ENCODE measurements at regions of chr2 and their contacts with region 1.

Region 1: GRCh38 chr2:168105127-168105683 is 142.2 kb downstream of the STK39 start:
- DNase-seq: no peak
- ATAC-seq: peak in 1 of 4 donors; percentile 20
- H3K4me3 ChIP-seq: no peak overlapping the region
- H3K27ac ChIP-seq: no peak overlapping the region
- H3K4me1 ChIP-seq: peaks cover 0 to 5% (median 0%) of the 10 kb centered on the region in 12 donors
- H3K27me3 ChIP-seq: no peaks in the 10 kb centered on the region
- CTCF ChIP-seq: no peak
- POLR2A ChIP-seq: no peak

Region 2: DNA sequence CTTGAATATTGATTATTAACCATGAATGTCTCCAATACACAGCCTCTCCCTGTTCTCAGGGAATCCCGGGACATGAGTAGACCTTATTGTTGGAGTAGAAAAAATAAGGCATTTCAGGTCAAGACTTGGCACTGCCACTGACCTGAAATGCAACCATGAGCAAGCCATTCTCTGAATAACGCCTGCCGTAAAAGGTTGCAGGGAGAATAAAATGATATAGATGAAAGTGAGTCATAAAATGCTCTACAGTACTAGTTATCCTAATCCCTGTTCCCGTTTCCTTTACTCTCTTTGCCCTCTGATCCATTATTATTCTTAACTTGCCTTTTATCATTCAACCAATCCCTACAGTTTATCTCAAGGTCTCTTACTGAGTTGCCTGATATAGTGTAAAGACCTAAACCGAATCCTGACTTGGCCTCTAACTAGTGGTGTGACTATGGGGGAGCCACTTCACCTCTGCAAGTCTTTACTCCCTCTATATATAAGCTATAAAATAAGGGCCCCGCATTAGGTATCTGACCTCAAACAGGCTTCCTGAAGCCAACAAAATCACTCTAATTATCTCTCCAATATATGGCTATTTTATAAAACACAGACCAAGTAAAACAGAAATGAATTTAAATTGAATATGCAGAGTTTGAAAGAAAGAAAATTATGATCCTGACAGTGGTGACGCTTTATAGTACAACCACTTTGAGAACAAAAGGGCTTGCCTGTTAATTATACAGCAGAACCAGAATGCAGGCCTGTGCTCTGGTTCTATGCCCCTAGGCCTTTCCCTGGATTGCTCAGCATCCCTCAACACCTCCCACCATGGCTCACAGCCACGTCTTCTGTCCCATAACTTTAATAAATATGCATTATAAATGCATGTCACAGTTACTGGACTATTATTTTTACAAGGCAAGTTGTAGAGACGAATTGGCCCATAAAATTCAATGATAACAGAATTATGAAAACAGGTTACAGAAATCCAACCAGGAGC is 40.9 kb before region 1 on chr2:
- intact Hi-C with region 1: loop called in 1 of 10 experiments (anchors 2 kb)
- DNase-seq: no peak
- ATAC-seq: no peak
- H3K4me3 ChIP-seq: no peak overlapping the region
- H3K27ac ChIP-seq: no peak overlapping the region
- H3K4me1 ChIP-seq: peaks cover 0 to 4% (median 0%) of the 10 kb centered on the region in 12 donors
- H3K27me3 ChIP-seq: no peaks in the 10 kb centered on the region
- CTCF ChIP-seq: no peak
- POLR2A ChIP-seq: no peak

Region 3: DNA sequence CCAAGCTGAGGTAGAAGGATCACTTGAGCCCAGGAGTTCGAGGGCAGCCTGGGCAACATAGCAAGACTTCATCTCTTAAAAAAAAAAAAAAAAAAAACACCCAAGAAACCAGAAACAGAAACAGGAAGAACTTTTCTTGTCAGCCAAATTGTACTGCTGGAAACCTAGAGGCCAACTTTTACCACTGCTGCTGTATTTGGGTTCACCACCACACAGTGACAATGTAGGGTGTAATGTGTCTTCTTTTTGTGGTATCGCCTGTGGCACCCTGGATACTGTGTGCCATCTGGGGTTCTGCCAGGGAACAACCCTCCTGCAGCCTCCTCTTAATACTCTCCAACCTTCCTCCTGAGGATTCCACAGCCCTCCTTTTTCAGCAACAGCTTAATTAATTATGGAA is 69.6 kb after region 1 on chr2:
- intact Hi-C with region 1: no loop called
- DNase-seq: no peak
- ATAC-seq: no peak
- H3K4me3 ChIP-seq: no peak overlapping the region
- H3K27ac ChIP-seq: peak overlapping the region in 1 of 12 donors; percentile 37
- H3K4me1 ChIP-seq: peaks cover 0 to 46% (median 3%) of the 10 kb centered on the region in 12 donors
- H3K27me3 ChIP-seq: no peaks in the 10 kb centered on the region
- CTCF ChIP-seq: no peak
- POLR2A ChIP-seq: no peak

Region 4: DNA sequence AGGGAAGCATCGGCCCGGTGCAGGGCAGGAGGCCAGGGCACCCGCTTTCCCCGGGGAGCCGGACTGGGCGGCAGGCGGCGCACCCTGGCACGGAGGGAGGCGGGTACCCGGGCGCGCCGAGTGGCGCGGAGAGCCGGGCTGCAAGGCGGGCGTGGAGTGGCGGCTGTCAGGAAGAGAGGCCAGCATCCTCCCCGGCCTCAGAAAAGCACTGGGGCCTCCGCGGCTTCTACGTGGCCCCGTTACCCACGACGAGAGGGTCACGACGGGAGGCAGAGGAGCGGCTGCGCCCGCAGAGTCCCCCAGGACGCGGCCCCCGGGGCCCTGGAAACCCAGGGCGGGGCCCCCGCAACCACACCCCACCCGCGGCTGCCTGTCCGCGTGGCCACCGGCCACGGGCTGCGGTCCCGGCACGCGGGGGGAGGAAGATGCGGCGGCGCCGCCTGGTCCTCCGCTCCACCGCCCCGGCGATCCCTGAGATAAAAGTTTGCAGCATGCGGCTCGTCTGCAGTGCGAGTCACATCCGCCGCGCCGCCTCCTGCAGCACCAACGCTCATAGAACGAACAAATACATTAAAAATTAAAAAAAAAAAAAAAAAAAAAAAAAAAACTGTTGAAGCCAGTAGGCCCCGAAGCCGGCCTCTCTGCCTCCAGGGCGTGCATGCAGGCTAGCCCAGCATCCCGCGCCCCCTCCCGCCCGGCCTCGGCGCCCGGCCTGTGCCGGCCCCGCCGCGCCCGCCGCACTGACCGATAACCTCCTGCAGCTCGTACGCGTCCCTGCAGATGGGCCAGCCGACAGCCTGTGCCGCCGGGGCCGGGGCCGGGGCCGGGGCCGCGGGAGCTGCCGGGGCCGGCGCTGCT is 141.5 kb after region 1 on chr2:
- intact Hi-C with region 1: no loop called
- DNase-seq: peak; percentile 69 to 87 (median 78)
- ATAC-seq: peak; percentile 52 to 86 (median 82)
- H3K4me3 ChIP-seq: peak overlapping the region; percentile 49 to 94 (median 80)
- H3K27ac ChIP-seq: peak overlapping the region; percentile 6 to 93 (median 88)
- H3K4me1 ChIP-seq: peaks cover 0 to 44% (median 27%) of the 10 kb centered on the region in 12 donors
- H3K27me3 ChIP-seq: no peaks in the 10 kb centered on the region
- CTCF ChIP-seq: peak in 9 of 12 donors; percentile 6 to 52 (median 40)
- POLR2A ChIP-seq: no peak

Region 5: GRCh38 chr2:169203928-169204327 is 1098.7 kb after region 1 on chr2:
- intact Hi-C with region 1: no loop called
- DNase-seq: no peak
- ATAC-seq: no peak
- H3K4me3 ChIP-seq: no peak overlapping the region
- H3K27ac ChIP-seq: no peak overlapping the region
- H3K4me1 ChIP-seq: no peaks in the 10 kb centered on the region
- H3K27me3 ChIP-seq: peaks cover 0 to 3% (median 0%) of the 10 kb centered on the region in 9 donors
- CTCF ChIP-seq: no peak
- POLR2A ChIP-seq: no peak